ENCODE measurements at regions of chr14 and their contacts with region 1.

Region 1: GRCh38 chr14:75307700-75308379 is 29.2 kb downstream of the FOS start:
- DNase-seq: peak; percentile 40 to 82 (median 76)
- ATAC-seq: peak; percentile 64
- H3K4me3 ChIP-seq: no peak overlapping the region
- H3K4me3 Mint-ChIP-seq: no peak overlapping the region
- H3K27ac ChIP-seq: no peak overlapping the region
- H3K27ac Mint-ChIP-seq: no peak overlapping the region
- H3K4me1 ChIP-seq: peaks cover 3% of the 10 kb centered on the region
- H3K4me1 Mint-ChIP-seq: peaks cover 5% of the 10 kb centered on the region
- H3K27me3 ChIP-seq: no peaks in the 10 kb centered on the region
- H3K27me3 Mint-ChIP-seq: peaks cover 2% of the 10 kb centered on the region
- CTCF ChIP-seq: peak; percentile 83

Region 2: GRCh38 chr14:74945823-74946682 is 361.8 kb before region 1 on chr14:
- CTCF ChIA-PET with region 1: interaction called, 5 read pairs
- POLR2A ChIA-PET with region 1: no interaction called
- intact Hi-C with region 1: loop called in 1 of 2 experiments (anchors 10 kb)
- DNase-seq: peak; percentile 49 to 83 (median 76)
- ATAC-seq: peak; percentile 83
- H3K4me3 ChIP-seq: no peak overlapping the region
- H3K4me3 Mint-ChIP-seq: peak overlapping the region; percentile 18
- H3K27ac ChIP-seq: no peak overlapping the region
- H3K27ac Mint-ChIP-seq: no peak overlapping the region
- H3K4me1 ChIP-seq: peaks cover 30% of the 10 kb centered on the region
- H3K4me1 Mint-ChIP-seq: peaks cover 26% of the 10 kb centered on the region
- H3K27me3 ChIP-seq: no peaks in the 10 kb centered on the region
- H3K27me3 Mint-ChIP-seq: peaks cover 3% of the 10 kb centered on the region
- CTCF ChIP-seq: peak; percentile 84

Region 3: DNA sequence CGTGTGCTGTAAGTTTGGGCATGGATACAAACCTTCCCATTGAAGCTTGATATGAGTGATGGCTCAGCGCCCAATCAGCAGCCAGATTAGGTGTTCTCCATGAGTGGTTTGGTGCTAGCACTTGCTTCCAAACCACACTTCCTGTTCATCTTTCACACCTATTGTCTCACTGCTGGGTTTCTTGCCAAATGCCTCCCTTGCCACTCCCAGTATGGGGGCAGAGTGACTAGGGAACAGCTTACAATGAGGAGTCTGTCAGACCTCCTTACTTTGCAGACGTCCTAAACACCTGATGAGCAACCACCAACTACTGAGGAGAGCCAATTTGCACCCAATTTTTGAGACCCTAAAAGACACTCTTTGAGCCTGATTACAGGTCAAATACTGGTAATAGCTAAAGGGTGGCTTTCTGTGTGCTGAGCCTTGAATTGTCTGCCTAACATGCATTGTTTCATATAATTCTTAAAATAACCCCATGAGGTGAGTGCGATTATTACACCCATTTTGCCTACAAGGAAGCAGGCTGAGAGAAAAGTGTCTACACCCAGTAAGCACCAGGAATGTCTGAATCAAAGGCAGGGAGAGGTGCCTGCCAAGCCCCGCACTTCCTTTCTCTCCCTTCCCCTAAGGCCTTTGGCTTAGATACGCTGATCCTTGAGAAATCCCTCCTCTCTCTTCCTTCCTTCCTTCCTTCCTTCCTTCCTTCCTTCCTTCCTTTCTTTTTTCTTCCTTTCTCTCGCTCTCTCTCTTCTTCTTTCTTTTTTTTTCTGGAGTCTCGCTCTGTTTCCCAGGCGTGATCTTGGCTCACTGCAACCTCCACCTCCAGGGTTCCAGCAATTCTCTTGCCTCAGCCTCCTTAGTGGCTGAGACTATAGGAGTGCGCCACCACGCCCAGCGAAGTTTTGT is 77.4 kb before region 1 on chr14:
- CTCF ChIA-PET with region 1: interaction called, 124 read pairs
- POLR2A ChIA-PET with region 1: no interaction called
- intact Hi-C with region 1: loop called in 1 of 2 experiments (anchors 1 kb)
- DNase-seq: peak; percentile 25 to 93 (median 56)
- ATAC-seq: peak; percentile 75
- H3K4me3 ChIP-seq: no peak overlapping the region
- H3K4me3 Mint-ChIP-seq: peak overlapping the region; percentile 24
- H3K27ac ChIP-seq: peak overlapping the region in 1 of 2 experiments; percentile 55
- H3K27ac Mint-ChIP-seq: peak overlapping the region; percentile 81
- H3K4me1 ChIP-seq: peaks cover 41% of the 10 kb centered on the region
- H3K4me1 Mint-ChIP-seq: peaks cover 51% of the 10 kb centered on the region
- H3K27me3 ChIP-seq: no peaks in the 10 kb centered on the region
- H3K27me3 Mint-ChIP-seq: no peaks in the 10 kb centered on the region
- CTCF ChIP-seq: peak; percentile 35

Region 4: DNA sequence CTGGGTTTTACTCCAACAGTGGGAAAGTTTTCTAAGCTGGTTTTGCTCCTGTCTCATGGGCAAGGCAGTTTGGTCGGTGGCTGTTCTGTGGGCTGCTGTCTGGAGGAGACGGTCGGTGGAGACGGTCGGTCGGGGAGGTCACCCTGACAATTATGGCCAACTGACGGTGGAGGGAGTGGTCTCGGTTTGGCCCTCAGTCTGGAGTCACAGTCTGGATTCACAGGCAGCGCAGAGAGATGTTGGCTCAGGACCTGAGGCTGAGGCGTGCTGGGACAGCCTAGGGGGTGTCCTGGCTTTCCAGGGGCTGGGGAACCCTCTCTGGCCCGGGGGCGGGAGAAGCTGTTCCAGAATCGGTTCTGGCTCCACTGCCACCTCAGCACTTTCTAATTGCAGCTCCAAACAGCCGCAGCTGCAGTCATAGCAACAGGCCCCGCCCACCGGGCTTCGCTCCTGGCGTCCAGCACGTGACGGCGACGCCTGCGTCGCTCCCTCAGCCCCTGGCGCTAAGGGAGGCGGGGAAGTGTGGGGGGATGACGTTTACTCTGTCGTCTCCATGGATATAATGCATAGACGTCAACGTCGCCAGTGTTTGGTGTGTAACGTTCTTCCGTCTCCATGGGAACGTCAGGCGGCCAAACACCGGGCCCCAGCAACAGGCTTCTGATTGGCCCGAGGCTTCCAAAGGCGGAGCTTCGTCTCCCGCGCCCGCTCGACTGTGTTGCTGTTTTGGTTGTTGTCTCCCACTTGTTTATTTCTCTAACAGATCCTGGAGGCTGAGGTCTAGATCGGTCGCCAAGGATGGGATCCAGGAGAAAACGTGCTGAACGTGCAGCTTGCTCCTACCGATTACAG is 49.0 kb before region 1 on chr14:
- CTCF ChIA-PET with region 1: no interaction called
- POLR2A ChIA-PET with region 1: no interaction called
- intact Hi-C with region 1: no loop called
- DNase-seq: peak; percentile 97 to 100 (median 100)
- ATAC-seq: peak; percentile 89
- H3K4me3 ChIP-seq: peak overlapping the region; percentile 45 to 54
- H3K4me3 Mint-ChIP-seq: peak overlapping the region; percentile 82
- H3K27ac ChIP-seq: peak overlapping the region; percentile 92 to 98
- H3K27ac Mint-ChIP-seq: peak overlapping the region; percentile 97
- H3K4me1 ChIP-seq: peaks cover 17% of the 10 kb centered on the region
- H3K4me1 Mint-ChIP-seq: peaks cover 29% of the 10 kb centered on the region
- H3K27me3 ChIP-seq: no peaks in the 10 kb centered on the region
- H3K27me3 Mint-ChIP-seq: no peaks in the 10 kb centered on the region
- CTCF ChIP-seq: no peak

Region 5: DNA sequence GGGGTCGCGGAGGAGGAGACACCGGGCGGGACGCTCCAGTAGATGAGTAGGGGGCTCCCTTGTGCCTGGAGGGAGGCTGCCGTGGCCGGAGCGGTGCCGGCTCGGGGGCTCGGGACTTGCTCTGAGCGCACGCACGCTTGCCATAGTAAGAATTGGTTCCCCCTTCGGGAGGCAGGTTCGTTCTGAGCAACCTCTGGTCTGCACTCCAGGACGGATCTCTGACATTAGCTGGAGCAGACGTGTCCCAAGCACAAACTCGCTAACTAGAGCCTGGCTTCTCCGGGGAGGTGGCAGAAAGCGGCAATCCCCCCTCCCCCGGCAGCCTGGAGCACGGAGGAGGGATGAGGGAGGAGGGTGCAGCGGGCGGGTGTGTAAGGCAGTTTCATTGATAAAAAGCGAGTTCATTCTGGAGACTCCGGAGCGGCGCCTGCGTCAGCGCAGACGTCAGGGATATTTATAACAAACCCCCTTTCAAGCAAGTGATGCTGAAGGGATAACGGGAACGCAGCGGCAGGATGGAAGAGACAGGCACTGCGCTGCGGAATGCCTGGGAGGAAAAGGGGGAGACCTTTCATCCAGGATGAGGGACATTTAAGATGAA is 28.6 kb before region 1 on chr14:
- CTCF ChIA-PET with region 1: no interaction called
- POLR2A ChIA-PET with region 1: no interaction called
- intact Hi-C with region 1: no loop called
- DNase-seq: peak in 7 of 9 experiments; percentile 44 to 85 (median 65)
- ATAC-seq: peak; percentile 3
- H3K4me3 ChIP-seq: peak overlapping the region; percentile 65 to 89
- H3K4me3 Mint-ChIP-seq: peak overlapping the region; percentile 97
- H3K27ac ChIP-seq: peak overlapping the region; percentile 81 to 90
- H3K27ac Mint-ChIP-seq: peak overlapping the region; percentile 98
- H3K4me1 ChIP-seq: peaks cover 50% of the 10 kb centered on the region
- H3K4me1 Mint-ChIP-seq: peaks cover 40% of the 10 kb centered on the region
- H3K27me3 ChIP-seq: peaks cover 10 to 38% of the 10 kb centered on the region in 2 experiments
- H3K27me3 Mint-ChIP-seq: peaks cover 17% of the 10 kb centered on the region
- CTCF ChIP-seq: no peak

Region 6: GRCh38 chr14:75322746-75323145 is 14.9 kb after region 1 on chr14:
- CTCF ChIA-PET with region 1: interaction called, 10 read pairs
- POLR2A ChIA-PET with region 1: no interaction called
- intact Hi-C with region 1: no loop called
- DNase-seq: no peak
- ATAC-seq: no peak
- H3K4me3 ChIP-seq: no peak overlapping the region
- H3K4me3 Mint-ChIP-seq: no peak overlapping the region
- H3K27ac ChIP-seq: no peak overlapping the region
- H3K27ac Mint-ChIP-seq: no peak overlapping the region
- H3K4me1 ChIP-seq: no peaks in the 10 kb centered on the region
- H3K4me1 Mint-ChIP-seq: no peaks in the 10 kb centered on the region
- H3K27me3 ChIP-seq: no peaks in the 10 kb centered on the region
- H3K27me3 Mint-ChIP-seq: peaks cover 4% of the 10 kb centered on the region
- CTCF ChIP-seq: no peak

Region 7: GRCh38 chr14:75487155-75487671 is 179.4 kb after region 1 on chr14:
- CTCF ChIA-PET with region 1: interaction called, 179 read pairs
- POLR2A ChIA-PET with region 1: no interaction called
- intact Hi-C with region 1: loop called (anchors 1 kb)
- DNase-seq: peak in 3 of 9 experiments; percentile 45 to 64 (median 47)
- ATAC-seq: peak; percentile 70
- H3K4me3 ChIP-seq: no peak overlapping the region
- H3K4me3 Mint-ChIP-seq: no peak overlapping the region
- H3K27ac ChIP-seq: no peak overlapping the region
- H3K27ac Mint-ChIP-seq: peak overlapping the region; percentile 15
- H3K4me1 ChIP-seq: peaks cover 4% of the 10 kb centered on the region
- H3K4me1 Mint-ChIP-seq: peaks cover 11% of the 10 kb centered on the region
- H3K27me3 ChIP-seq: no peaks in the 10 kb centered on the region
- H3K27me3 Mint-ChIP-seq: no peaks in the 10 kb centered on the region
- CTCF ChIP-seq: no peak

Region 8: DNA sequence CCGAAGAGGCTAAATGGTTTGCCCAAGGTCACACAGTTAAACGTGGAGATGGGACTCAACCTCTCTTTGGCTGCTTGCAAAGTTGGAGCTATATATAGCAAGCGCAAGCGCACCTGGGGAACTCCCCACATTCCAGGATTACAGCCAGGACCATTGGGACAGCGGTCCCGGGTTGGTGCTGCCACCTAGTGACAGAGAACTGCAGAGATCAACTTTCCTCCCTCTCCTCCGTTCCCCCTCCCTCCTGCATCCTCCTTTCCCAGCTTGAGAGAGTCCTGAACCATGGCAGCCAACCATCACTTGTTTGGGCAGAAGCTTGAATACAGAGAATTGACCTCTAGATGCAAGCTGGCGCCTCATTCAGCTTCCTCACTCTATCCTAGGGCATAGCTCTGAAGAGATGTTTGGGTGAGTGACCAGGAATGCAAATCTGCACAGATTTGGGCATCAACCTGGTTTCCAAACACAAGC is 253.2 kb after region 1 on chr14:
- CTCF ChIA-PET with region 1: interaction called, 35 read pairs
- POLR2A ChIA-PET with region 1: no interaction called
- intact Hi-C with region 1: loop called (anchors 1 to 2 kb)
- DNase-seq: peak in 7 of 9 experiments; percentile 25 to 74 (median 56)
- ATAC-seq: peak; percentile 36
- H3K4me3 ChIP-seq: no peak overlapping the region
- H3K4me3 Mint-ChIP-seq: no peak overlapping the region
- H3K27ac ChIP-seq: no peak overlapping the region
- H3K27ac Mint-ChIP-seq: no peak overlapping the region
- H3K4me1 ChIP-seq: peaks cover 8% of the 10 kb centered on the region
- H3K4me1 Mint-ChIP-seq: peaks cover 15% of the 10 kb centered on the region
- H3K27me3 ChIP-seq: no peaks in the 10 kb centered on the region
- H3K27me3 Mint-ChIP-seq: no peaks in the 10 kb centered on the region
- CTCF ChIP-seq: peak; percentile 51

Measured in CD8-positive, alpha-beta T cell (primary cell).